Sigmoid colon (tissue), 7 donors: ENCODE measurements at regions of chr6 and their contacts with region 1.

Region 1: GRCh38 chr6:111483736-111484632 is 966 bp upstream of the REV3L start:
- DNase-seq: peak; percentile 99
- H3K4me3 ChIP-seq: peak overlapping the region; percentile 80 to 99 (median 93)
- H3K27ac ChIP-seq: peak overlapping the region; percentile 99 to 100 (median 100)
- H3K4me1 ChIP-seq: peaks cover 0 to 37% (median 33%) of the 10 kb centered on the region in 4 donors
- H3K27me3 ChIP-seq: no peaks in the 10 kb centered on the region
- CTCF ChIP-seq: no peak
- EP300 ChIP-seq: peak in 2 of 4 donors; percentile 10 to 34
- POLR2A ChIP-seq: peak; percentile 52

Region 2: GRCh38 chr6:111367393-111368088 is 116.4 kb before region 1 on chr6:
- intact Hi-C with region 1: loop called (anchors 5 kb)
- DNase-seq: no peak
- H3K4me3 ChIP-seq: no peak overlapping the region
- H3K27ac ChIP-seq: peak overlapping the region in 3 of 4 donors; percentile 70 to 76 (median 71)
- H3K4me1 ChIP-seq: peaks cover 0 to 33% (median 16%) of the 10 kb centered on the region in 4 donors
- H3K27me3 ChIP-seq: no peaks in the 10 kb centered on the region
- CTCF ChIP-seq: no peak
- EP300 ChIP-seq: peak in 1 of 4 donors; percentile 7
- POLR2A ChIP-seq: no peak

Region 3: DNA sequence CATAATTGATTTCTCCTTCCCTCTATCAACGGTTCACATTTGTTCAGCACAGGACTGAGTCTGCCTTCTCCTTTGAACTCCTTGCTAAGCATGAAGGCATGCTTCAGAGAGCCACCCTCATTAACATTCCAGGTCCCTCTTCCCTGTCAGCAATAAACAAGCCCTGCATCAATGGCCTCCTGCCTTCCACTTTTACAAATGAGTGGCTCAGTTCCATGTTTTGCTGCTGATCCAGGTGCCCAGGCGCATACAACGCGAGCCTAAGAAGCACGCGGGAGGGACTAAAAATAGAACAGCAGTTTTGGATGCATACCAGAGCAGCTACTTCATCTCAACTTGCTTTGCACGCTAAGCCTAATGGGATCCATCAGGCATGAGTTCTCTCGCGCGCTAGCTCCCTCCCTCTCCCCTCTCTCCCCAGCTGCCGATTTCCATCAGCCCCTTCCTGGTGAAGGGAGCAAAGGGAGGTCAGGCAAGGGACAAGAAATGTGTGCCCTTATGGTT is 68.3 kb after region 1 on chr6:
- intact Hi-C with region 1: loop called (anchors 5 kb)
- DNase-seq: peak; percentile 91
- H3K4me3 ChIP-seq: peak overlapping the region in 2 of 4 donors; percentile 6 to 9
- H3K27ac ChIP-seq: peak overlapping the region; percentile 76 to 85 (median 82)
- H3K4me1 ChIP-seq: peaks cover 0 to 45% (median 32%) of the 10 kb centered on the region in 4 donors
- H3K27me3 ChIP-seq: no peaks in the 10 kb centered on the region
- CTCF ChIP-seq: no peak
- EP300 ChIP-seq: peak in 2 of 4 donors; percentile 54 to 69
- POLR2A ChIP-seq: no peak

Region 4: DNA sequence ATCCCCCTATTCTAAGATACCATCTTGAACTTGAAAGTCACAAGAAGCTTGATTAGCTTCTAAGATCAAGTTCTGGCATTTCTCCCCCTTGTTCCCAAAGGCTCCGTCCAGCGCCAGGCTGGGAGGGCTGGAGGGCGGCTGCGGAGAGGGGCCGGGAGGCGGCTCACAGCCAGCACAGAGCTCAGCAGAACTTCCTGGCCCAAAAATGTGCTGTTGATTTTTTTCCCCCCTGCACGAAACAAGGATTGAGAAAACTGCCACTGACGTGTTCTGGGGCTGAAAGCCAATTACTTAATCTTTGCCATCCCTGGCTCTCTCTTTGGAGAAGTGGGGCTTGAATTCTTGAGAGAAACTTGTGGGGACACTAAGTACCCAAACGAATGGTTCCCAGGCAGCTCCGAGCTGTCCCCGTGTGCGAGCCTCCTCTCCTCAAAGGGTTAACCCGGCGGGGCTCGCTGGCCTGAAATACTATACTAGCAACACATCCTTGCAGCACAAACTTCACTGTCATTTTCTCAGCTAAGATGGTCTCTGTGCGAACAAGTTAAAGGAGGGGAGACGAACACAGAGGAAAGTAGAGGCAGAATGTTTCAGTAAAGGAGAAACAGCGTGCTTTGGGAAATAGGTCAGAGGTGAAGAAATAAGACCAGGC is 121.2 kb after region 1 on chr6:
- intact Hi-C with region 1: loop called (anchors 1 kb)
- DNase-seq: peak; percentile 92
- H3K4me3 ChIP-seq: peak overlapping the region; percentile 46 to 59 (median 54)
- H3K27ac ChIP-seq: peak overlapping the region; percentile 94 to 98 (median 96)
- H3K4me1 ChIP-seq: peaks cover 0 to 70% (median 62%) of the 10 kb centered on the region in 4 donors
- H3K27me3 ChIP-seq: no peaks in the 10 kb centered on the region
- CTCF ChIP-seq: no peak
- EP300 ChIP-seq: peak in 3 of 4 donors; percentile 48 to 68 (median 54)
- POLR2A ChIP-seq: peak in 1 of 2 donors; percentile 21

Region 5: DNA sequence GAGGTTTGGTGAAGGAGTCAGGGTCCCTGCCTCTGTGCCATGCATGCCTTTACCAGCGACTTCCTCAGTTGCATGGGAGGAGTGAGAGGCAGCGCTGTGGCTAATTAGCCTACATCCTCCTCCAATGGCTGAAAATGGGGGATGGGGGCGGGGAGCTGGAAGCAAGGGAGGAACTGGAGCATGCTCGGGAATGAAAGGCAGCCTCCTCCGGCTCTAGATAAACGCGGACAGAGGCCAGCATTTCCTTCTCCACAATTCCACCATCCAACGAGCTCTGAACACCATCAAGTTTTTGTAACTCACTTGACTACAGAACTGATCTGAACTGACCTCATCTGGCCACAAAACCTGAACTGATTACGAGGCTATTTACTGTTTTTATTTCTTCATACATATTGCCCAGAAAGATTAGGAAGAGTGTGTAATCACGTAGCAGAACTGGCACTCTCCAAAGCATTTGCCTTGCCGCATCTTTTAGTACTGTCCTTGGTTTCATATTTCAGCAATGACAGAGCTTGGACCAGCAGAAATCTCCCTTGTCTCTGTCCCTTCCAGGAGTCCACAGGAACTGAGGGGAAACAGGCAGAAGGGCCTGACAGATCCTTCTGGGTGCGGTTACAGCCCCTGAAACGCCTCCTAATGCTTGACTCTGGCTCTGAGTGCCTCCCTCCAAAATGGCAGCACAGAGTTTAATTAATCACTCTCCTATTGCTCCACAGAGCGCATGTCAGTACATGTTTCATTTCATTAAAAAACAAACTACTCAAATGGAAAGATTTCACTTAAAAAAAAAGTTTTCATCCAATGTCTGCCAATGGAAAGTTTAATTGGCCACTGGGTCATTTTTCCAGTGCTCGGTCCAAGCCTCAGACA is 179.9 kb after region 1 on chr6:
- intact Hi-C with region 1: loop called (anchors 5 kb)
- DNase-seq: peak; percentile 85
- H3K4me3 ChIP-seq: no peak overlapping the region
- H3K27ac ChIP-seq: peak overlapping the region; percentile 66 to 85 (median 79)
- H3K4me1 ChIP-seq: peaks cover 0 to 97% (median 81%) of the 10 kb centered on the region in 4 donors
- H3K27me3 ChIP-seq: no peaks in the 10 kb centered on the region
- CTCF ChIP-seq: no peak
- EP300 ChIP-seq: peak in 1 of 4 donors; percentile 6
- POLR2A ChIP-seq: no peak

Region 6: DNA sequence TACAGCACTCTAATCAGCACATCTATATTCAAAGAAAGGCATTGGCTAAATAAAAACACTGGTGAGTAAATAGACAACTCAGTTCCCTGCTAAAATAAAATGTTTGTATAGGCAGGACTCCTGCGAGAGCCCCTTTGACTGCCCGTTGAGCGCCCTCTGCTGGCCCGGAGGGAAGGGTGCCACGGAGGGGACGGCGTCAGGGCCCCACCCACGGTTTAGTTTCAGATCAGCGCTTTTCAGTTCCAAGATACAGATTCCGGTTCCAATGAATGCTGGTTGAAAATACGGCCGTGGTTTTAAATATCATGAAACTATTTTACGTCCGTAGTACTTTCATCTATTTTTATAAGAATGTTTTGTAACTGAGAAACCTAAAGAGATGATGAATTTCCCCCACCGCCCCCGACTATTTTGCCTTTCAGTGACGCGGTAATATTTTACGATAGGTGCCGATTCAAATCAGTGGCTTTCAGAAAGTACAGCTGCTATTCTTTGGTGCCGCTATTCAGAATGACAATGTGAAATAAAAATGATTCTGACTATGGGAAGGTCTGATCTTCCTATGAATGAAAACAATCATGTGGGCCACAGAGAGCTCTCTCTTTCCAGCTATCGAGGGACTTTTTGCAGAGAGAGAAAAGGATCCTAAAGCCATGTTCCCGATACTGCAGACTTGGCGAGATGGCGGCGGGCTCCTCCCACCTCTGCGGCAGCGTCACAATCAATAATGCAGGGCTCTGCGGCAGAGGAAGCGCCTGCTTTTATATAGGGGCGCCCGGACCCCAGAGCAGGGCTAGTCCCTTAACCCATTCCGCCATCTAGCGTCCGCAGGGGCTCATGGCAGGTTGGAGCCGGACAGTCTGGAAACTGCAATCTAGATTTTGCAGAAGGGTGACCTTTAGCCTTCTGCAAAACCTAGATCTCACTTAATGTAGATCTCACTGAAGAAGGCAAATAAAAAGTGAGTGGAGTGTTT is 559.3 kb after region 1 on chr6:
- intact Hi-C with region 1: loop called (anchors 5 kb)
- DNase-seq: peak; percentile 92
- H3K4me3 ChIP-seq: peak overlapping the region; percentile 32 to 61 (median 56)
- H3K27ac ChIP-seq: peak overlapping the region; percentile 77 to 84 (median 80)
- H3K4me1 ChIP-seq: peaks cover 0 to 35% (median 25%) of the 10 kb centered on the region in 4 donors
- H3K27me3 ChIP-seq: no peaks in the 10 kb centered on the region
- CTCF ChIP-seq: peak; percentile 86 to 94 (median 94)
- EP300 ChIP-seq: no peak
- POLR2A ChIP-seq: no peak